Activated T-helper 1 cell treated with anti-CD3 and anti-CD28 coated beads, Interleukin-12 subunit alpha, Interleukin-12 subunit beta, Interleukin-2, Interleukin-4 antibody, amounts not matched to agents 30 ng/mL and 10 ng/mL and 1 ng/mL, durations not matched to agents 14 hours and 24 hours and 36 hours (primary cell): ENCODE measurements at regions of chr10 and their contacts with region 1.

Region 1: DNA sequence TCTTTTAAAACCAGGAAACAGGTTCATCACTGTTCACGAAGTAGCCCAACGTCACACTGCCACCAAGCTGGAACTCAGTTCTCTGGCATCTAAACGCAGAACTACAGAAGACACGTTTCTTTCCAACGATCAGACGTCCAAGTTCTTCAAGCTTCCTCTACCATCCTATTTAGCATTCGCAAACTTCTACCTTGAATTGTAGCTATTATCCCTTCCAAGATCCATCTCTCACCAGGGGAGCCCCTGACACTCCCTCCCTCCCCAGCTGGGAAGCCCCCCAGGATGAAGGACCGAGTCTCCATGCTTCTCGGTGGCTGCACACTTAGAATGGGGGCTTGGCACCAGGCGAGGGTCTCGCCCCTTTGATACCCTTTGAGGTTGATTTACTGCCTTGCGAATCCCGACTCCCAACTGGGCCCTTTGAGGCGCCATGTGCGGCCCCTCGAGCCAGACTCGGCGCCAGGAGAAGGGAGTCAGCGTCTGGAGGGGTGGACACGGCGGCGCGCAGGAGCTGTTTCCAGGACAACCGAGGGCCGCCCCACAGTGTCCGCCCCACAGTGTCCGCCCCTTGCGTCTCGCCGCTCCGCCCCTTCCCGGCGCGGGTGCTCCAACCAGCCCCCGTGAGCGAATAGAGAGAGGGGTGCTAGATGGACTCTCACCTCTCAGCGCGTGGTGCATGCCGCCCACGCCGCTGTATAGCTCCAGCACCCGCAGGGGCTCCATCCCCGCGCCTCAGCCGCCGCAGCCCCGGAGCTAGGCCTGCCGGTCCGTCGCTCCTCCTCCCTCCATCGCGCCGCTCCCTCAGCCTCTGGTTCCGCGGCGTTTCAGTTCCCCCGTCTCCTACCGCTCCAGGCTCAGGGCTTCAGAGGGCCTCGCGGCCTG is at the start of gene TRDMT1:
- DNase-seq: peak; percentile 78
- H3K4me3 Mint-ChIP-seq: peak within 1 kb of the TSS; percentile 84
- H3K27ac Mint-ChIP-seq: peak within 1 kb of the TSS; percentile 77
- H3K4me1 Mint-ChIP-seq: peaks cover 27% of the 10 kb centered on the region
- H3K27me3 Mint-ChIP-seq: peaks cover 2% of the 10 kb centered on the region
- total RNA-seq, gene TRDMT1: 3.3 and 4.2 TPM in 2 replicates

Region 2: GRCh38 chr10:15859906-15860691 is 1341.1 kb before region 1 on chr10 and contains the start of gene MINDY3:
- intact Hi-C with region 1: loop called (anchors 10 kb)
- DNase-seq: peak; percentile 66
- H3K4me3 Mint-ChIP-seq: peak within 1 kb of the TSS; percentile 99
- H3K27ac Mint-ChIP-seq: peak within 1 kb of the TSS; percentile 93
- H3K4me1 Mint-ChIP-seq: peaks cover 36% of the 10 kb centered on the region
- H3K27me3 Mint-ChIP-seq: peaks cover 19% of the 10 kb centered on the region
- total RNA-seq, gene MINDY3: 14.5 and 16.2 TPM in 2 replicates

Region 3: GRCh38 chr10:17144757-17145156 is 56.4 kb before region 1 on chr10:
- intact Hi-C with region 1: loop called (anchors 2 kb)
- DNase-seq: peak; percentile 31
- H3K4me3 Mint-ChIP-seq: no peak overlapping the region
- H3K27ac Mint-ChIP-seq: peak overlapping the region; percentile 45
- H3K4me1 Mint-ChIP-seq: peaks cover 19% of the 10 kb centered on the region
- H3K27me3 Mint-ChIP-seq: no peaks in the 10 kb centered on the region

Region 4: GRCh38 chr10:17216217-17216900 is 15.2 kb after region 1 on chr10:
- intact Hi-C with region 1: loop called (anchors 1 kb)
- DNase-seq: peak; percentile 34
- H3K4me3 Mint-ChIP-seq: peak overlapping the region; percentile 45
- H3K27ac Mint-ChIP-seq: peak overlapping the region; percentile 98
- H3K4me1 Mint-ChIP-seq: peaks cover 51% of the 10 kb centered on the region
- H3K27me3 Mint-ChIP-seq: no peaks in the 10 kb centered on the region

Region 5: DNA sequence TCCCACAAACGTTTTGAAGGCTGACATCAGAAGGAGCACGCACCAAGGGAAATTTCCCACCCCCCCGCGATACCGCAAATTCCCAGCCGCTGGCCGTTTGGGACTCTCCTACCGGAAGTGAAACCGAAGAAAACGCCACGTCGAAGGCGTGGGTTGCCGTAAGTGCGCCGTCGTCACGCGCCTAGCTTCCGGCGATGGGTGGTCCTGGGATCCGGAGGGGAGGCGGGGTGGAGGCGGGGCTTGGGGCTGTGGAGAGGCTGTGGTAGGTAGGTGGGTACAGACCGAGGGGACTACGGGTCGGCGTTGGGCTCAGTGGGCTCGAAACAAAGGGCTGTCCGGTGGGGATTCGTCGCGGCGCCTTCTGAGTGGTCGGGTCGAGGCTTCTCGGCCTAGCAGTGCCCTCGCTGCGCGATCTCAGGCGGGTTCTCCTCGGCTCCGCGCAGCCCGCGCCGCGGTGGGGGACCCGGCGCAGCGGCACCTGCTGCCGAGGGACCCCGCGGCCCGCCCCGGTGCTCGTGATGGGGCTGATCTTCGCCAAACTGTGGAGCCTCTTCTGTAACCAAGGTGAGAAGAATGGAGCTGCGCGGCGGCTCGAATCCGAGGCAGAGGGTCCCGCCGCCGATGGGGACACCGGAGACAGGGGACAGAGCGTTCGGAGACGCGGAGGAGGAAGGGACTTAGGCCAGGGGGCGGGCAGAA is 1458.1 kb after region 1 on chr10 and contains the start of gene ARL5B:
- intact Hi-C with region 1: loop called (anchors 10 kb)
- DNase-seq: peak; percentile 92
- H3K4me3 Mint-ChIP-seq: peak within 1 kb of the TSS; percentile 100
- H3K27ac Mint-ChIP-seq: peak within 1 kb of the TSS; percentile 98
- H3K4me1 Mint-ChIP-seq: peaks cover 38% of the 10 kb centered on the region
- H3K27me3 Mint-ChIP-seq: no peaks in the 10 kb centered on the region
- total RNA-seq, gene ARL5B: 14.4 and 15.2 TPM in 2 replicates